Prostate gland (tissue), 2 donors: ENCODE measurements at regions of chr5 and their contacts with region 1.

Region 1: DNA sequence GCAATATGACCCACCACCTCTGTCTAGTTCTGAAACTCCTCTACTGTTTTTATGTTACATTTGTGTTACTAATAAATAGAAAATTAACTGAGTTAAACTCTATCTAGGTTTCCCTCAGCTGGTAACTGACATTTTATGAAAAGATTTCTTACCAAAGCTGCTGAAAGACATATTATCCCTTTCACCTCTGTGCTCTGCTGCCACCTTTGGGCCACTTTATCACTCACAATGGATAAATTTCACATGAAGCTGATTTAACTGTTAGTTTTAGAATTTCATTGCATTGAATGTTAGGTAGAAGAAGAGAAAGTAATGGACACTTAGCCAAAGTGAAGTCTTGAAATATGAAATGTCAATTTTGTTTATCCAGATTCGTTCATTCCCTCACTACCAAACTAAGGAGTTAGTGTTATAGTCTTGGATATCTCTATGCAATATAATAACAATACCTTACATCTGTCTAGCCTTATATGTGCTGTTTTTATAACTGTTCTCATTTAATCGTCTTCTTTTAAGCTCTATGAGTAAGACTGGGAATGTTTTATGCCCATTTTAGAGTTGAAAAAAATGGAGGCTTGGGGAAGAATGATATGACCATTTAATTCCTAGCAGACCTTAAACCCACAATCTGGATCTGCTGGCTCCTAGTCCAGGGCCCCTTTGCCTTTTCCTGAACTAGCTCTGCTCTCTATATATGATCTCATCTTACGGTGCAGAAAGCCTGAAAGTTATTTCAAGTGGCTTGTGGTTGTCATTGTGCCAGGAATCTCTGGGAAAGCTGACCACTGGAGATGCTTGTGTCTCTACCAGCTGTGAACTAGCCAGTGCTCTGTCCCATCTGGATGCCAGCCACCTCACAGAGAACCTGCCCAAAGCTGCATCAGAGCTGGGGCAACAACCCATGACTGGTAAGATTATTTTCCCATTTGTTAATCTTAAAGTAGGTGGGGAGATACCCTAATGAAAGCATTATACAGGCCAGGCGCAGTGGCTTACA is 97.1 kb downstream of the GOLPH3 start:
- DNase-seq: peak; percentile 44
- H3K4me3 ChIP-seq: no peak overlapping the region
- H3K27ac ChIP-seq: no peak overlapping the region
- H3K4me1 ChIP-seq: no peaks in the 10 kb centered on the region
- H3K27me3 ChIP-seq: no peaks in the 10 kb centered on the region
- CTCF ChIP-seq: peak; percentile 30 to 83 (median 74)
- POLR2A ChIP-seq: no peak

Region 2: DNA sequence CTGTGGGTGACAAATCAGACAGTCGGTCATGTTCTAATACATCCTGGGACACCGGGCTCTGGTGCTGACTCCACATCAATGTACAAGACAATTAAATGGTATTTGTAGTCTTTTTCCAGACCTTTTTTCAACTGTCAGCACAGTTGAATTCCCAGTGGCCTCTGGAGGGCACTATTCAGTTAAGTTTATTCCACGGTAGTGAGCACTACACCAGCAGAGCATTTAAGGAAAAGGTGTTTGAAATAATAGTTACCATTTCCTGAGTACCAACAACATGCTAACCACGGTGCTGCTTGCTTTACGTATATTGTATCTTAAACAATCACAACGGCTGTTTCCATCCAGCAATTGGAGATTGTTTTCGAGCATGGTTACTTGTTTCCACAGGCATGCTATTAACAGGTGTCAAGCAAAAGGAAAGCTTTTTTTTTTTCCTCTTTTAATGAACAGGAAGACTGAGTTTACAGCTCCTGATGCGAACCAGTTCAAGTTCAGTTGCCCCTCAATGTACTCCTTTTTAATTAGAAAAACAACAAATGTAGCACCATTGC is 251.4 kb before region 1 on chr5:
- intact Hi-C with region 1: loop called (anchors 5 kb)
- DNase-seq: peak; percentile 65
- H3K4me3 ChIP-seq: no peak overlapping the region
- H3K27ac ChIP-seq: no peak overlapping the region
- H3K4me1 ChIP-seq: no peaks in the 10 kb centered on the region
- H3K27me3 ChIP-seq: no peaks in the 10 kb centered on the region
- CTCF ChIP-seq: peak in 3 of 4 experiments; percentile 67 to 72 (median 72)
- POLR2A ChIP-seq: no peak

Region 3: DNA sequence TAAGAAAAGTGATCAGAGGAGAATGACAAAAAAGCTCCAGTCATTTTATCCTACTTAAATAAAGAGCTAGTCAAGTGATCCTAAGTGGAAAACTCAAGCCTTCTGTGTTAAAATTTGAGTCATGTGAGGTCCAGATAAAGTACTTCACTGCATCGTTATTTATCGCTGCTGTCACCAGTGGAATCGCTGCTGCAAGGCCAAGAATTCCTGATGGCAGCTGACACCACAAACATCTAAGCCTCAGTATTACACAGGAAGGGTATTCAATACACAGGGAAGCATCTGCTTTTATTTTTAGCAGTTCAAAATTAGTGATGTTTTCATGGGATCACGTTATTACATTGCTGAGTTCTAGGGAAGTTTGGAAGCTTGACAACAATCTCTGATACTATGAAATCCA is 93.1 kb before region 1 on chr5:
- intact Hi-C with region 1: no loop called
- DNase-seq: no peak
- H3K4me3 ChIP-seq: no peak overlapping the region
- H3K27ac ChIP-seq: no peak overlapping the region
- H3K4me1 ChIP-seq: no peaks in the 10 kb centered on the region
- H3K27me3 ChIP-seq: no peaks in the 10 kb centered on the region
- CTCF ChIP-seq: no peak
- POLR2A ChIP-seq: no peak